Naive thymus-derived CD4-positive, alpha-beta T cell (primary cell): ENCODE measurements at regions of chr12 and their contacts with region 1.

Region 1: DNA sequence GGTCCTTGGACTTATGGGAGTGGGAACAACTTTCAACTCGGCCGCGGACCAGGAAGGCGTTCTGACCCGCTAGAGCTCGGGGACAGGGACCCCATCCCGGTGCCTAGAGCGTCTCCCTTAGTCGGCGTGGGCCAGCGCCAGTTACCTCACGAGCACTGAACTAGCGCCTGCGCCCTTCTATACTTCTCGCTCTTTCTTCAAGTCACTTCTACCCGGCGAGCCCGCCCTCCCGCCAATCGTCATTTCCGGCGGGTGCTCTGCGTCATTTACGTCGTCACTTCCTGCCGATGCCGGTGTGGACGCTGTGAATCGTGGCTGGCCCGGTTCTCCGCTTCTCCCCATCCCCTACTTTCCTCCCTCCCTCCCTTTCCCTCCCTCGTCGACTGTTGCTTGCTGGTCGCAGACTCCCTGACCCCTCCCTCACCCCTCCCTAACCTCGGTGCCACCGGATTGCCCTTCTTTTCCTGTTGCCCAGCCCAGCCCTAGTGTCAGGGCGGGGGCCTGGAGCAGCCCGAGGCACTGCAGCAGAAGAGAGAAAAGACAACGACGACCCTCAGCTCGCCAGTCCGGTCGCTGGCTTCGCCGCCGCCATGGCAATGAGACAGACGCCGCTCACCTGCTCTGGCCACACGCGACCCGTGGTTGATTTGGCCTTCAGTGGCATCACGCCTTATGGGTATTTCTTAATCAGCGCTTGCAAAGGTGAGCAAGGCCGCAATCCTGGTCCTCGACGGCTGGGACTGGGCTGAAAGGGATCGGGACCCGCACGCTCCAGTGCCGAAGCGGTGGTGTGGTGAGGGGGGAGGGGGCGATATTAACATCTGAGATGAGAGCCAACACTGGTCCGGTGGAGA is at the start of gene STRAP:
- DNase-seq: peak; percentile 94 to 98 (median 97)
- ATAC-seq: peak; percentile 97
- H3K4me3 ChIP-seq: peak within 1 kb of the TSS; percentile 97
- H3K4me3 Mint-ChIP-seq: peak within 1 kb of the TSS; percentile 91 to 100 (median 97)
- H3K27ac ChIP-seq: peak within 1 kb of the TSS; percentile 96
- H3K27ac Mint-ChIP-seq: peak within 1 kb of the TSS; percentile 98 to 100 (median 99)
- H3K4me1 ChIP-seq: peaks cover 22 to 32% of the 10 kb centered on the region in 2 donors
- H3K4me1 Mint-ChIP-seq: peaks cover 35 to 66% (median 60%) of the 10 kb centered on the region in 7 donors
- H3K27me3 ChIP-seq: no peaks in the 10 kb centered on the region
- H3K27me3 Mint-ChIP-seq: no peaks in the 10 kb centered on the region
- total RNA-seq, gene STRAP: 42.2 to 97.2 (median 70.9) TPM

Region 2: GRCh38 chr12:14394317-14395073 is 1487.8 kb before region 1 on chr12:
- CTCF ChIA-PET with region 1: no interaction called
- POLR2A ChIA-PET with region 1: no interaction called
- intact Hi-C with region 1: loop called in 1 of 2 experiments (anchors 10 kb)
- DNase-seq: peak in 7 of 9 donors; percentile 57 to 82 (median 71)
- ATAC-seq: peak; percentile 86
- H3K4me3 ChIP-seq: peak overlapping the region; percentile 33
- H3K4me3 Mint-ChIP-seq: peak overlapping the region; percentile 49 to 87 (median 76)
- H3K27ac ChIP-seq: peak overlapping the region; percentile 75
- H3K27ac Mint-ChIP-seq: peak overlapping the region; percentile 83 to 97 (median 95)
- H3K4me1 ChIP-seq: peaks cover 62 to 84% of the 10 kb centered on the region in 2 donors
- H3K4me1 Mint-ChIP-seq: peaks cover 47 to 99% (median 91%) of the 10 kb centered on the region in 7 donors
- H3K27me3 ChIP-seq: no peaks in the 10 kb centered on the region
- H3K27me3 Mint-ChIP-seq: no peaks in the 10 kb centered on the region

Region 3: DNA sequence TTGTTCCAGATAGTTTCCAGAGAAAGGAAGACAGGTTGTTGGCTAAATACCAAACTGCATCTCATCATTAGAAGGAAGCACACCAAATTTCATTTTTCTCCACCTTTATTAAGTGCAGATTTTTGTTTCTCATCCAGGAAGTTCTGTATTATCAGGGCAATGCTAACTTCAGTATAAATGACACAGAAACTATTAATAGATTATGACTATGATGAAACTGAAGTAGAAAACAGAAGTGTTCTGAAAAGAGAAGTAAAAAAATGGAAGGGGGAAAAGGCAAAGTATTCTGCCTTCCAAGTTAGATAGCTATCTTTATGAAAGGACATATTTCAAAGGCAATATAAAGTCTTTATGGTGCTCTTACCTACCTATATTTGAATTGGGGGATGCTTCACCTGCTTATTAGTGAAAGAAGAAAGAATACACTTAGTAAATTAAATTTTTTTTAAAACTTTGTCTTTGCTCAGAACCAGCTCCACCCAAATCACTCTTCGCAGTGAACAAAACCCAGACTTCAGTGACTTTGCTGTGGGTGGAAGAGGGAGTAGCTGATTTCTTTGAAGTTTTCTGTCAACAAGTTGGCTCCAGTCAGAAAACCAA is 336.1 kb before region 1 on chr12:
- CTCF ChIA-PET with region 1: interaction called, 3 read pairs
- POLR2A ChIA-PET with region 1: no interaction called
- intact Hi-C with region 1: loop called in 1 of 2 experiments (anchors 1 kb)
- DNase-seq: peak in 7 of 9 donors; percentile 73 to 89 (median 85)
- ATAC-seq: peak; percentile 93
- H3K4me3 ChIP-seq: no peak overlapping the region
- H3K4me3 Mint-ChIP-seq: peak overlapping the region; percentile 36 to 85 (median 76)
- H3K27ac ChIP-seq: peak overlapping the region; percentile 74
- H3K27ac Mint-ChIP-seq: peak overlapping the region; percentile 95 to 100 (median 98)
- H3K4me1 ChIP-seq: peaks cover 0 to 50% of the 10 kb centered on the region in 2 donors
- H3K4me1 Mint-ChIP-seq: peaks cover 30 to 98% (median 86%) of the 10 kb centered on the region in 7 donors
- H3K27me3 ChIP-seq: peaks cover 0 to under 1% of the 10 kb centered on the region in 2 donors
- H3K27me3 Mint-ChIP-seq: no peaks in the 10 kb centered on the region

Region 4: DNA sequence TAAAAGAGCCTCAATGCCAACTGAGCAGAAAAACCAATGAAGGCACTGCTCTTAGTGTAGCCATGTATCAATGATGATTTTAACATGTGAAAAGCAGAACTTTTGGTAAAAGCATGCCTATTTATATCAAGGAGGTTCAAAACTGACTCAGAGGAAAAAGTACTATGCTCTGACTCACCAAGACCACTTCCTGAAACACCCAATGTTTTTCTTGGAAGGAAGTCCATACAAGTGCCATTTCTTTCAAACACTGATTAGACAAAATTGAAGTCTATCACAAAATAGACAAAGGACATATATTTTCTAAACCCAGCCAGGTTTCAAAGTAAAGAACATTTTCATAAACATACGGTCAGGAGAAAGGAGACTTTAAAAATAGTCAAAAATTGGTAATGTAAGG is 181.8 kb before region 1 on chr12:
- CTCF ChIA-PET with region 1: no interaction called
- POLR2A ChIA-PET with region 1: no interaction called
- intact Hi-C with region 1: loop called in 1 of 2 experiments (anchors 5 kb)
- DNase-seq: no peak
- ATAC-seq: peak; percentile 64
- H3K4me3 ChIP-seq: no peak overlapping the region
- H3K4me3 Mint-ChIP-seq: peak overlapping the region in 1 of 10 donors; percentile 74
- H3K27ac ChIP-seq: no peak overlapping the region
- H3K27ac Mint-ChIP-seq: peak overlapping the region in 1 of 9 donors; percentile 77
- H3K4me1 ChIP-seq: no peaks in the 10 kb centered on the region
- H3K4me1 Mint-ChIP-seq: peaks cover 0 to 35% (median 7%) of the 10 kb centered on the region in 7 donors
- H3K27me3 ChIP-seq: no peaks in the 10 kb centered on the region
- H3K27me3 Mint-ChIP-seq: peaks cover 0 to 12% (median 0%) of the 10 kb centered on the region in 5 donors

Region 5: GRCh38 chr12:15808652-15809051 is 73.7 kb before region 1 on chr12:
- CTCF ChIA-PET with region 1: no interaction called
- POLR2A ChIA-PET with region 1: no interaction called
- intact Hi-C with region 1: no loop called
- DNase-seq: no peak
- ATAC-seq: no peak
- H3K4me3 ChIP-seq: no peak overlapping the region
- H3K4me3 Mint-ChIP-seq: no peak overlapping the region
- H3K27ac ChIP-seq: no peak overlapping the region
- H3K27ac Mint-ChIP-seq: no peak overlapping the region
- H3K4me1 ChIP-seq: no peaks in the 10 kb centered on the region
- H3K4me1 Mint-ChIP-seq: peaks cover 0 to 1% (median 0%) of the 10 kb centered on the region in 7 donors
- H3K27me3 ChIP-seq: no peaks in the 10 kb centered on the region
- H3K27me3 Mint-ChIP-seq: peaks cover 5 to 25% (median 12%) of the 10 kb centered on the region in 5 donors

Region 6: GRCh38 chr12:15899282-15899870 is 17.0 kb after region 1 on chr12:
- CTCF ChIA-PET with region 1: interaction called, 7 read pairs
- POLR2A ChIA-PET with region 1: interaction called, 3 read pairs
- intact Hi-C with region 1: loop called (anchors 1 to 2 kb)
- DNase-seq: peak in 5 of 9 donors; percentile 22 to 32 (median 31)
- ATAC-seq: peak; percentile 72
- H3K4me3 ChIP-seq: no peak overlapping the region
- H3K4me3 Mint-ChIP-seq: no peak overlapping the region
- H3K27ac ChIP-seq: no peak overlapping the region
- H3K27ac Mint-ChIP-seq: peak overlapping the region in 6 of 9 donors; percentile 25 to 74 (median 53)
- H3K4me1 ChIP-seq: no peaks in the 10 kb centered on the region
- H3K4me1 Mint-ChIP-seq: peaks cover 0 to 13% (median 7%) of the 10 kb centered on the region in 7 donors
- H3K27me3 ChIP-seq: no peaks in the 10 kb centered on the region
- H3K27me3 Mint-ChIP-seq: no peaks in the 10 kb centered on the region